ENCODE measurements at regions of chr16 and their contacts with region 1.

Region 1: DNA sequence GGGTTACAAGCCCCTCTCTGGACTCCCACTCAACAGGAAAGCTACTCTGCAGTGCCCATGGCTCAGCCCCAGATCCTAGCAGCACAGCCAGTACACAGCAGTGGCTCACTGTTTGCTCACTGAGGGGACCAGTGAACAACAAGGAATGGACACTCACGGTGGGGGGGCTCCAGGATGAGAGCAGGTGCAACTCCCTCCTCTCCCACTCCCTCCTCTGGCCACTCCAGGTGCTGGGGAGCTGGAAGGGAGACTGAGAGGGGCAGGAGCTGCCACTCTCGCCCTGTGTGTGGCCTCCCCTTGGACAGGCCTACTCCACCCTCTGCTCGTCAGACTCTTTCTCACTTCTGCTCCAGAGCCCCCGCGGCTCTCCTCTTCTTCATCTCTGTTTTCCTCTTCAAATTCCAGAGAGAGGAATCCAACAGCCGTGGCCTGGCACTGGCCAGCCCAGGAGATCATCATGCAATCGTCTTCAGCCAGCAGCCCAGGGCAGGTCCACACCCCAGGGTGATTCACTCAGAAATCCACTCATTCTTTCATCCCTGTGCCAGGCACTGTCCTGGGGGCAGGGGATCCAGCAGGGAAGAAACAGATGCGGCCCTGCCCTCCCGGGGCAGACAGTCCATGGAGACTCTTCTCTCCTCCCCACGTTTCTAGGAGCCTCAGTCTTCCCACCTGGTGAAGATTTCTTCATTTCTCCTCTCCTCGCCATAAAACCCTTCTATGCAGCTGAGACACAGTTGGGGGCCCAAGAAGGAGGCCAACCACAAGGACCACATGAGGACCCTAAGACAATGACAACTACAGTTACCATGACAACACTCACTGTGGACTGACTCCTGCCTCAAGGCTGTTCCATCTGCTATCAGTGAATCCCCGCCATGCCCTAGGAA is 30.7 kb downstream of the CFAP20 start:
- DNase-seq: no peak
- H3K4me3 ChIP-seq: no peak overlapping the region
- H3K4me3 Mint-ChIP-seq: no peak overlapping the region
- H3K27ac ChIP-seq: no peak overlapping the region
- H3K27ac Mint-ChIP-seq: no peak overlapping the region
- H3K4me1 ChIP-seq: no peaks in the 10 kb centered on the region
- H3K4me1 Mint-ChIP-seq: peaks cover 13% of the 10 kb centered on the region
- H3K27me3 ChIP-seq: no peaks in the 10 kb centered on the region
- H3K27me3 Mint-ChIP-seq: peaks cover 0 to 8% (median 4%) of the 10 kb centered on the region in 3 donors
- CTCF ChIP-seq: no peak

Region 2: DNA sequence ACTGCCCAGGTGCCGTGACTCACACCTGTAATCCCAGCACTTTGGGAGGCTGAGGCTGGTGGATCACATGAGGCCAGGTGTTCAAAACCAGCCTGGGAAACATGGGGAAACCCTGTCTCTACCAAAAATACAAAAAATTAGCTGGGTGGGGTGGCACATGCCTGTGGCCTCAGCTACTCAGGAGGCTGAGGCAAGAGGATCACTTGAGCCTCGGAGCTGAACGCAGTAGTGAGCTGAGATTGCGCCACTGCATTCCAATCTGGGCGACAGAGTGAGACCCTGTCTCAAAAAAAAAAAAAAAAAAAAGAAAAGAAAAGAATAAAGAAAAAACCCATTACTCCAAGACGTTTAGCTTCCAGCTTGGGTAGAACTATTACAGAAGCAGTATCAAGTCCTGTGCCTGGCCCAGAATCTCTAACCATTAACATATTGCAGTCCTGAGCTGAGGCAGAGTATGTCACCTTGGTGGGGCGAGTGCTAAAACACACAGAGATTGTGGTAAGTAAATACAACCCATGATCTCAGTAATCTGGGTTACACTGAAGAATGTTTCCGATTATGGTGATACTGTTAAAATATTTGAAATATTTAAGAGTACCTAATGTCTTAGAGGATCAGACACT is 53.9 kb after region 1 on chr16:
- intact Hi-C with region 1: loop called in 1 of 2 experiments (anchors 10 kb)
- DNase-seq: no peak
- H3K4me3 ChIP-seq: no peak overlapping the region
- H3K4me3 Mint-ChIP-seq: no peak overlapping the region
- H3K27ac ChIP-seq: no peak overlapping the region
- H3K27ac Mint-ChIP-seq: no peak overlapping the region
- H3K4me1 ChIP-seq: no peaks in the 10 kb centered on the region
- H3K4me1 Mint-ChIP-seq: no peaks in the 10 kb centered on the region
- H3K27me3 ChIP-seq: no peaks in the 10 kb centered on the region
- H3K27me3 Mint-ChIP-seq: peaks cover 0 to 4% (median 0%) of the 10 kb centered on the region in 3 donors
- CTCF ChIP-seq: no peak

Region 3: DNA sequence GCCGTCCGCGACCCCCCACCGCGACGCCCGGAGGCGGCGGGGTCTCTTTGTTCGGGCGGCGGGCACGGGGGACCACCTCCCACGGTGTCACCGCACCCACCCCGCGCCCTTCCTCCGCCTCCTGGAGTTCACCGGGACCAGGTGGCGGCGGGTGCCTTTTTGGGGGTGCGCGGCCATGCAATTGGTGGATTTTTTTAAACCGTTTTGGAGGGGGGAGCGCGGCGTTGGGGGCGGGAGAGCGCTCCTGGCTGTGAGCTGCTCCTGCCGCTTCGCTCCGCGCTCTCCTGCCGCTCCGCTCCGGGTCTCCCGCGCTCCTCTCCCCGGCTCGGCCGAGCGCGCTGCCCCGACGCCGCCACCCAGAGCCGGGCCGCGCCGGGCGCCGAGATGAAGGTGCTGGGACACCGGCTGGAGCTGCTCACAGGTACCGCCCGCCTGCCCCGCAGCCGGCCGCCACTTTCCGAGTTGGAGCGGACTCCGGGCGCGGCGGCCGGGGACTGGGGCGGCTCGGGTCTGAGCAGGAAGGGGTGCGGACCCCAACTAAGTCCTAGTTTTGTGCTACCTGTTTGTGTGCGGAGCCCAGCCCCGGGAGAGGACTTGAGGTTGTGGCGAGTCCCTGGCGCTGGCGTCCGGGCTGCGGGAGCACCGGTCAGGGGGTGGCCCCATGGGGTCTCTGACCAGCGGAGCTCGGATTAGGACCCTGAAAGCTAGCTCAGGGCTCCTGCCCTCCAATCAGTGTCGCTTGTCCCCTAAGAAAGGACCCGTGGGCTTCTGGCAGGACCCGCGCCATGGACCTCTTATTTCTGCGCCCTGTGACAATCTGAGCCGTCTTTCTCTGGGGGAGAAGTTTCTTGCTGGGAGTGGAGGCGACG is 365.8 kb after region 1 on chr16:
- intact Hi-C with region 1: no loop called
- DNase-seq: no peak
- H3K4me3 ChIP-seq: peak overlapping the region in 1 of 3 experiments; percentile 23
- H3K4me3 Mint-ChIP-seq: peak overlapping the region in 1 of 2 donors; percentile 56
- H3K27ac ChIP-seq: no peak overlapping the region
- H3K27ac Mint-ChIP-seq: no peak overlapping the region
- H3K4me1 ChIP-seq: peaks cover 0 to 6% of the 10 kb centered on the region in 2 donors
- H3K4me1 Mint-ChIP-seq: peaks cover 2% of the 10 kb centered on the region
- H3K27me3 ChIP-seq: peaks cover 37 to 53% of the 10 kb centered on the region in 2 donors
- H3K27me3 Mint-ChIP-seq: peaks cover 54 to 88% (median 73%) of the 10 kb centered on the region in 3 donors
- CTCF ChIP-seq: no peak

Measured in CD14-positive monocyte (primary cell).